ENCODE measurements at regions of chr6 and their contacts with region 1.

Region 1: DNA sequence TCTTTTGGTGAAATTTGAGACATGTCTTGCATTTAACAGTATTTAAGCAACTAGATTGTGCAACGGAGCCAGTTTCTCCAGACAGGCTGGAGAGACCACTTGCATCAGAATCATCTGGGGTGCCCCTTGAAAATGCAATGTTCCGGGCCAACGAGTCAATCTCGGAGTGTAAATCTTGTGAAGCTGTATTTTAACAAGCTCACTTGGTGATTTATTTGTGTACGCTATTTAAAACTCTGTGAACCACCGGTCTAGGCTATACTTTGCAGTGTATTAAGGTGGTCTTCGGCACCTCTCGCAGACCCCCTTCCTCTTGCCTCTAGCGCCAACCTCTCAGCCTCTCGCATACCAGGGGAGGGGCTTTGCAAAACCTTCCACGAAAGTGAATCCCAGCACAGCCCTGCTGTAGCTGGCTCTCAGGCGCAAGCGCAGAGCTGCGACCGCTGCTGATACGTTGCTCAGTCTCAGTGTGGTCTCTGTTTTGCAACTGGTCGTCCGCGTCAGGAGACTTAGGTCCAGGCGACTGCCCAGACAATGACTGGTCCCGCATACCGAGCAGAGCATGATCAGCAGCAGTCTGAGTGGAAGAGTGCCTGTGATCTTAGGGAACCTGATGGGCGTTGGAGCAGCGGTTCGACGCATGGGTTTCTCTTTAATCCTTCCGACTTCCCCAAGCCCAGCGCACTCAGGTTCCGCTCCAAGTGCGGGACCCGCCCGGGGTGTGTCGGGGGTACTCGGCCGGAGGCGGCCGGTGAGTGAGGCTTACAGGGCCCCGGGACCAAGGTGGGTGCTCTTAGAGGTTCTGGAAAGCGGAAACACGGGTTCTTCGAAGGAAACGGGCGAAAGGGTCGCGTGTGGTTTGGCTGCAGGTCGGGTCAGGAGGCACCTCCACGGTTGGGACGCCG is at the start of gene ZNF391:
- DNase-seq: peak; percentile 82 to 91
- ATAC-seq: peak; percentile 92
- H3K4me3 ChIP-seq: peak within 1 kb of the TSS; percentile 72 to 78
- H3K27ac ChIP-seq: peak within 1 kb of the TSS in 1 of 2 donors; percentile 39
- H3K4me1 ChIP-seq: no peaks in the 10 kb centered on the region
- H3K27me3 ChIP-seq: no peaks in the 10 kb centered on the region
- total RNA-seq, gene ZNF391: 2.6 to 4.5 TPM

Region 2: GRCh38 chr6:27479319-27480182 is 91.0 kb after region 1 on chr6:
- intact Hi-C with region 1: loop called in 1 of 2 experiments (anchors 5 kb)
- DNase-seq: peak; percentile 77 to 92
- ATAC-seq: peak; percentile 96
- H3K4me3 ChIP-seq: peak overlapping the region; percentile 93 to 100
- H3K27ac ChIP-seq: peak overlapping the region; percentile 92 to 100
- H3K4me1 ChIP-seq: no peaks in the 10 kb centered on the region
- H3K27me3 ChIP-seq: no peaks in the 10 kb centered on the region

Region 3: GRCh38 chr6:27672113-27672799 is 283.7 kb after region 1 on chr6:
- intact Hi-C with region 1: no loop called
- DNase-seq: no peak
- ATAC-seq: no peak
- H3K4me3 ChIP-seq: no peak overlapping the region
- H3K27ac ChIP-seq: no peak overlapping the region
- H3K4me1 ChIP-seq: no peaks in the 10 kb centered on the region
- H3K27me3 ChIP-seq: peaks cover 0 to 1% of the 10 kb centered on the region in 2 donors

Region 4: DNA sequence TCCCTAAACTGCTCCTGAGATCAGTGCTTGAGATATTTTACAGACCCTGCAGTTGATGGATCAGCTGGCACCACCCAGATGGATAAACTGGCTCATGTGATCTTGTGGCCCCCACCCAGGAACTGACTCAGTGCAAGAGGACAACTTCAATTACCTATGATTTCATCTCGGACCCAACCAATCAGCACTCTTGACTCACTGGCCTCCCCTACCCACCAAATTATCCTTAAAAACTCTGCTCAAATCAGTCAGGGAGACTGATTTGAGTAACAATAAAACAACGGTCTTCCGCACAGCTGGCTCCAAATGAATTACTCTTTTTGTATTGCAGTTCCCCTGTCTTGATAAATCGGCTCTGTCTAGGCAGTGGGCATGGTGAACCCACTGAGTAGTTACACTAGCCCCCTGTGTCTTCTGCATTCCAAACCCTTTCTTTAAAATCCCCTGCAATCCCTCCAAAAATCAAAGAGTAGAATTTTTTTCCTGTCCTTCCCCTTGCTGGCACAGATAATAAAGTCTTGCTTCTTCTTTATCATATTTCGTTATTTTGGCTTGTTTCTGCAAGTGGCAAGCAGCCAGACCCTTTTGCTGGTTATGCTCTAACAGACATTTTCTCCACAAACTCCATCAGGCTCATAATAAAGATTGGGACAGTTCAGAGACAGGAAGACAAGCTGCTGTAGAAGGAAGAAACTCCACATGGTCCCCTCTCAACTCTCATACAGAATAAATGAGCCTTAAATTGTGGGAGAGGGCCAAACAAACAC is 616.8 kb after region 1 on chr6:
- intact Hi-C with region 1: no loop called
- DNase-seq: no peak
- ATAC-seq: no peak
- H3K4me3 ChIP-seq: no peak overlapping the region
- H3K27ac ChIP-seq: no peak overlapping the region
- H3K4me1 ChIP-seq: no peaks in the 10 kb centered on the region
- H3K27me3 ChIP-seq: no peaks in the 10 kb centered on the region

Measured in aorta (tissue), 5 donors.